HepG2 (cell line): ENCODE measurements at regions of chr14 and their contacts with region 1.

Region 1: GRCh38 chr14:59344682-59345455 is 120.3 kb downstream of the GPR135 start:
- DNase-seq: no peak
- ATAC-seq: no peak
- H3K4me3 ChIP-seq: no peak overlapping the region
- H3K27ac ChIP-seq: no peak overlapping the region
- H3K4me1 ChIP-seq: peaks cover 11% of the 10 kb centered on the region; the same call in 1 of the 2 replicates
- H3K27me3 ChIP-seq: no peaks in the 10 kb centered on the region
- CTCF ChIP-seq: no peak
- EP300 ChIP-seq: no peak
- POLR2A ChIP-seq: no peak
- RAD21 ChIP-seq: no peak

Region 2: GRCh38 chr14:59275653-59276052 is 69.2 kb before region 1 on chr14:
- CTCF ChIA-PET with region 1: no interaction called
- POLR2A ChIA-PET with region 1: no interaction called
- in situ Hi-C with region 1: no loop called
- intact Hi-C with region 1: no loop called
- DNase-seq: peak; percentile 66
- ATAC-seq: peak; percentile 75
- H3K4me3 ChIP-seq: no peak overlapping the region
- H3K27ac ChIP-seq: no peak overlapping the region
- H3K4me1 ChIP-seq: peaks cover 34% of the 10 kb centered on the region
- H3K27me3 ChIP-seq: no peaks in the 10 kb centered on the region
- CTCF ChIP-seq: no peak
- EP300 ChIP-seq: no peak
- POLR2A ChIP-seq: no peak
- RAD21 ChIP-seq: no peak

Region 3: DNA sequence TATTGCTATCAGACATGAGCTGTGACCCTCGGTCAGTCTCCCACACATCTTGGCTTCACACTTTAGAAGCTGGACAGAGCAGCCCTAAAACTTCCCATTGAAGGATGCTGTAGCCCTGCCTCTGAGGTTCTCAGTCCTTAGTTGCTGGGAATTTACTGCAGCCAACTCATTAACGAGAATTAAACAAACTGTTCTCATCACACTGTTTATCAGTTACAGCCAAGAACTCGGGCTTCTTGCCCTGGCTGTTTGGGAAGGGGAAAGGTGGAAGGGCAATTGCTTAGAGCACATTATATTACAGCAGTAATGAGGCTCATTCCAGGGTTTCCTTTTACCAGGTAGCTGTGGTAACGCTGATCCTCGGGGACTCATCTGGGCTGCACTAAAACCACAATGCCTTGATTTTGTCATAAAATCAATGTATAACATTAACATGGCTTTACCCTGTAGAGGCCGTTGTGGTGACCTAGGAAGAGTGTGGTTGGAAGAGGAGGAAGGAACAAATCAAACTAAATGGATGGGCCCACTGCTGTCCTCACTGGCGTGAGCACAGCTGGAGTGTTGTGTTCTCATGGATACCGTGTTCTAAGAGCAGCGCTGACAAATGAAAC is 33.2 kb after region 1 on chr14:
- CTCF ChIA-PET with region 1: no interaction called
- POLR2A ChIA-PET with region 1: no interaction called
- in situ Hi-C with region 1: no loop called
- intact Hi-C with region 1: loop called (anchors 1 kb)
- DNase-seq: no peak
- ATAC-seq: no peak
- H3K4me3 ChIP-seq: no peak overlapping the region
- H3K27ac ChIP-seq: no peak overlapping the region
- H3K4me1 ChIP-seq: peaks cover 9% of the 10 kb centered on the region
- H3K27me3 ChIP-seq: no peaks in the 10 kb centered on the region; a peak in 1 of 5 replicates
- CTCF ChIP-seq: no peak
- EP300 ChIP-seq: no peak
- POLR2A ChIP-seq: no peak
- RAD21 ChIP-seq: no peak

Region 4: GRCh38 chr14:59483900-59484638 is 139.2 kb after region 1 on chr14 and contains the starts of genes JKAMP and L3HYPDH:
- CTCF ChIA-PET with region 1: no interaction called
- POLR2A ChIA-PET with region 1: no interaction called
- in situ Hi-C with region 1: no loop called
- intact Hi-C with region 1: no loop called
- DNase-seq: peak; percentile 92
- ATAC-seq: peak; percentile 93
- H3K4me3 ChIP-seq: peak within 1 kb of the TSS; percentile 78 to 87 (median 83)
- H3K27ac ChIP-seq: peak within 1 kb of the TSS; percentile 96
- H3K4me1 ChIP-seq: peaks cover 46% of the 10 kb centered on the region
- H3K27me3 ChIP-seq: peaks cover 0 to 4% of the 10 kb centered on the region in 2 experiments; a peak in 1 of 5 replicates
- CTCF ChIP-seq: peak; percentile 83
- EP300 ChIP-seq: no peak
- POLR2A ChIP-seq: peak; percentile 94 to 98
- RAD21 ChIP-seq: peak; percentile 68
- total RNA-seq, gene JKAMP: 41.6 and 56.4 TPM in 2 replicates
- total RNA-seq, gene L3HYPDH: 22.4 and 30.5 TPM in 2 replicates